Activated naive CD8-positive, alpha-beta T cell treated with anti-CD3 and anti-CD28 coated beads, Interleukin-2, amount 10 ng/mL, durations not matched to agents 7 days and 5 days (primary cell): ENCODE measurements at regions of chr16 and their contacts with region 1.

Region 1: DNA sequence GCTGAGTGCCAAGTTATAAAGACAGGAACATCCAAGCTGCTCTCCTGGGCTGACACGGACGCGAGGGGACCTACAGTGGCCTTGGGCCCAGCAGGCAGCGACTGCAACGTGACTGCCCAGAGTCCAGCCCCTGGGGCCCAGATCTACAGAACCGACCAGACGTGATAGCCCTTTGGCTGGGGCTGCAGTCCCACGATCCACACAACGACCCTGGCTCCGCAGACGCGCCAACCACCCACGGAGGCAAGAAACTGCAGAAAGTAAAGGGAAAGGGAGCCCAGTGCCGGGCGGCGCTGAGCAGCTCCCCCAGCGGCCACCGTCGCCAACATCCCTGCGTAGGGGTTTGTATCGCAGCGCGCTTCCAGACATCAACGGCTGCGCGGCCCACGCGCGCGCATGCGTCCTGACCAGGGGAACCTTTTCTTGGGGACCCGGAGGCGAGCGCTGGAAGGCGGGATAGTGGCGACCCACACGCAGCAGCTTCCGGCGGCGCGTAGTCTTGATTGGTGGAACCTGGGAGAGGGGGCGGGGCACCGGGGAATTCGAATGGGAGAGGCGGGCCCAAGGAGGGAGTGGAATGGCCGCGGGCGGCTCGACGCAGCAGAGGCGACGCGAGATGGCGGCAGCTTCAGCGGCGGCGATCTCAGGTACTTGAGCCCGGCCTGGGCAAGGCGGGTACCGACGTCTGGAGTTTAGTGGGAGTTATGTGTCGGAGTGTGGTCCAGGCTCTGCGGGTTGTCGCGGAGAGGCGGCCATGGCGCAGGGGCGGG is at the start of gene KIF22:
- DNase-seq: peak; percentile 100
- ATAC-seq: peak; percentile 97
- H3K4me3 Mint-ChIP-seq: peak within 1 kb of the TSS; percentile 99
- H3K27ac Mint-ChIP-seq: peak within 1 kb of the TSS; percentile 98
- H3K4me1 Mint-ChIP-seq: peaks cover 33% of the 10 kb centered on the region
- H3K27me3 Mint-ChIP-seq: no peaks in the 10 kb centered on the region
- total RNA-seq, gene KIF22: 191 to 199 TPM

Region 2: GRCh38 chr16:29700253-29700987 is 89.9 kb before region 1 on chr16:
- POLR2A ChIA-PET with region 1: interaction called, 33 read pairs
- DNase-seq: peak; percentile 78
- ATAC-seq: peak; percentile 20
- H3K4me3 Mint-ChIP-seq: peak overlapping the region; percentile 62
- H3K27ac Mint-ChIP-seq: peak overlapping the region; percentile 75
- H3K4me1 Mint-ChIP-seq: peaks cover 29% of the 10 kb centered on the region
- H3K27me3 Mint-ChIP-seq: no peaks in the 10 kb centered on the region

Region 3: GRCh38 chr16:29738514-29738913 is 51.9 kb before region 1 on chr16:
- POLR2A ChIA-PET with region 1: interaction called, 64 read pairs
- DNase-seq: no peak
- ATAC-seq: peak; percentile 91
- H3K4me3 Mint-ChIP-seq: peak overlapping the region; percentile 61
- H3K27ac Mint-ChIP-seq: peak overlapping the region; percentile 78
- H3K4me1 Mint-ChIP-seq: peaks cover 43% of the 10 kb centered on the region
- H3K27me3 Mint-ChIP-seq: no peaks in the 10 kb centered on the region

Region 4: GRCh38 chr16:29745853-29746345 is 44.5 kb before region 1 on chr16 and contains the start of gene C16orf54:
- POLR2A ChIA-PET with region 1: interaction called, 64 read pairs
- DNase-seq: peak; percentile 88
- ATAC-seq: peak; percentile 81
- H3K4me3 Mint-ChIP-seq: peak within 1 kb of the TSS; percentile 98
- H3K27ac Mint-ChIP-seq: peak within 1 kb of the TSS; percentile 98
- H3K4me1 Mint-ChIP-seq: peaks cover 38% of the 10 kb centered on the region
- H3K27me3 Mint-ChIP-seq: no peaks in the 10 kb centered on the region
- total RNA-seq, gene C16orf54: 84.2 to 88.0 TPM

Region 5: DNA sequence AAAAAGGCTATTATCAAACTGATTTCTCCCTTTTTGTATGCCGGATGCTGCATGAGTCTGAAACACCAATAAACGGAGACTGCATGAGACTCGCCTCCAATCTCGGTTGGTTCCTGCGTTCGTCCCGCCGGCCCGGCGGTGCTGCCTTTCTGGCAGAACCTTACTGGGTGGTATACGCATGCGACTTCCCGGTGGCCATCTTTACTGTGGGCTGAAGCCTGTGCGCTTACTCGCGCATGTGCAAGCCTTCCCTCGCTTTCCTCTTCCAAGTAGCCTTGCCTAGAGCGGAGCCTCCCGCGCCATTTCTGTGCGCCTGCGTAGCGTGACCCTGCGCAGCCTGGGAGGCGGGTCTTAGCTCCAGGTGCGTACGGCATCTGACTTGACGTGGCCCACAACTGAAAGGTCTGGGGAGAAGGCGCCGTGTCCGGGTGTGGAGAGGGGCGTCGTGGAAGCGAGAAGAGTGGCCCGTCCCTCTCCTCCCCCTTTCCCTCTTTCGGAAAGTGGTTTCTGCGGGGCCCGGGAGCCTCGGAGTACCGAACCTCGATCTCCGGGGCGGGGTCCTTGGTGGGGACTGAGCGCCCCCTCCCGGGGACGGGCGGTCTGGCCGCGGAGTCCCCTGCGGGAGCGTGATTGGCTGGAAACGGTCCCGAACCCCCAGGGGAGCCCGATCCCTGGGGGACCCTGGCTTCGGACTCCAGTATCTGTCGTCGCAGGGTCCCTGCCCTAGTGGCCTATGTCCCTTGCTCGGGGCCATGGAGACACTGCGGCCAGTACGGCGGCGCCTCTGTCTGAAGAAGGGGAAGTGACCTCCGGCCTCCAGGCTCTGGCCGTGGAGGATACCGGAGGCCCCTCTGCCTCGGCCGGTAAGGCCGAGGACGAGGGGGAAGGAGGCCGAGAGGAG is 25.7 kb after region 1 on chr16 and contains the start of gene PAGR1:
- POLR2A ChIA-PET with region 1: interaction called, 19 read pairs
- DNase-seq: peak; percentile 96
- ATAC-seq: peak; percentile 78
- H3K4me3 Mint-ChIP-seq: peak within 1 kb of the TSS; percentile 93
- H3K27ac Mint-ChIP-seq: peak within 1 kb of the TSS; percentile 96
- H3K4me1 Mint-ChIP-seq: peaks cover 39% of the 10 kb centered on the region
- H3K27me3 Mint-ChIP-seq: peaks cover 12% of the 10 kb centered on the region
- total RNA-seq, gene PAGR1: 29.8 to 34.3 TPM

Region 6: GRCh38 chr16:29848420-29849297 is 58.3 kb after region 1 on chr16:
- POLR2A ChIA-PET with region 1: interaction called, 10 read pairs
- DNase-seq: peak; percentile 89
- ATAC-seq: peak; percentile 92
- H3K4me3 Mint-ChIP-seq: no peak overlapping the region
- H3K27ac Mint-ChIP-seq: no peak overlapping the region
- H3K4me1 Mint-ChIP-seq: peaks cover 4% of the 10 kb centered on the region
- H3K27me3 Mint-ChIP-seq: no peaks in the 10 kb centered on the region